GM10248 (cell line): ENCODE measurements at regions of chr11 and their contacts with region 1.

Region 1: GRCh38 chr11:87290304-87290922 is 252.7 kb downstream of the TMEM135 start:
- DNase-seq: peak; percentile 53
- CTCF ChIP-seq: peak; percentile 62

Region 2: DNA sequence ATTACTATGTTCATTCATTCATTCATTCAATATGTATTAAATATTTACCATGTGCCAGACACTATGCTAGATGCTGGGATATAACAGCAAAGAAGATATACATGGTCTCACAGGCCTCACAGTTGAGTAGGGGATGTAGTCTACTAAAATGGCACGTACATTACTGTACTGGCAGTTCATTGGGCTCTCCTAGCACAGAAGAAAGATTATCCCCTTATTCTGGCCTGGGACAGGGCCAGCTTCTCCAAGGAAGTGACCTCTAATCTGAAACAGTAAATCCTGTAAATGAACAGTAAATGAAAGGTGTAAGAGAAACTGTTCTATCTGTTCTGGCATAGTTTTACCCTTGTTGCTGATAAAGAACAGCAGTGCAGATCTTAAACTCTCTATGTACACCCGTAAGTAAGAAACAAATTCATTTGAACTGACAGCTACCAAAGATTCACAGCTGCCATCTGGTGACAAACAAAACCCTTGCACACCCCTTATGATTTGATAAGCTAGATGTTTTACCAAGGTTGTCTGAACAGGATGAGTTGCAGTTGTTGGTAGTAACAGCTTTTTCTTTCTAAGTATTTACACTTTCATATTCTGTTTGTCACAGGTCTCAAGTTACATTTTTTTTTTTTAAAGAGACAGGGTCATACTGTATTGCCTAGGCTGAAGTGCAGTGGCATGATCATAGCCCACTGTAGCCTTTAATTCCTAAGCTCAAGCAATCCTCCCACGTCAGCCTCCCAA is 10.4 kb after region 1 on chr11:
- CTCF ChIA-PET with region 1: interaction called, 22 read pairs
- POLR2A ChIA-PET with region 1: no interaction called
- DNase-seq: no peak
- CTCF ChIP-seq: no peak